Psoas muscle (tissue), 8 donors: ENCODE measurements at regions of chr1 and their contacts with region 1.

Region 1: DNA sequence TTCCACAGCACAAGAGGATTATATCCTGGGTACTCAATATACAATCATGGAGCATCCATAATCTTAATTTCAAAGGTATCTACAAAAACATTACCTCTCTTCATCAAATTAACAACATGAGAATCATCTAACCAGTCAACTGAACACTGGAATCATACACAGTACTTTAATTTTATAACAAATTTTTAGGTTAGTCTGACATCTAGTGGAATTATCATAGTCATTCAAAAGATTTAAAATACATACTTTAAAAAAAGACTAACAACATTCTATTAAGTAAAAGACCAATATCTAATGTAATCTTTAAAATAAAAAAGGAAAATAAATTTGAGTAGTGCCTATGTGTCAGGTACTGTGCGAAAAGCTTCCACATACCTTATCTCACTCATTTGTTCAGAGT is 16.8 kb upstream of the SH3GLB1 start:
- DNase-seq: no peak
- ATAC-seq: no peak
- H3K4me3 ChIP-seq: no peak overlapping the region
- H3K27ac ChIP-seq: no peak overlapping the region
- H3K4me1 ChIP-seq: no peaks in the 10 kb centered on the region
- H3K27me3 ChIP-seq: no peaks in the 10 kb centered on the region
- CTCF ChIP-seq: no peak

Region 2: DNA sequence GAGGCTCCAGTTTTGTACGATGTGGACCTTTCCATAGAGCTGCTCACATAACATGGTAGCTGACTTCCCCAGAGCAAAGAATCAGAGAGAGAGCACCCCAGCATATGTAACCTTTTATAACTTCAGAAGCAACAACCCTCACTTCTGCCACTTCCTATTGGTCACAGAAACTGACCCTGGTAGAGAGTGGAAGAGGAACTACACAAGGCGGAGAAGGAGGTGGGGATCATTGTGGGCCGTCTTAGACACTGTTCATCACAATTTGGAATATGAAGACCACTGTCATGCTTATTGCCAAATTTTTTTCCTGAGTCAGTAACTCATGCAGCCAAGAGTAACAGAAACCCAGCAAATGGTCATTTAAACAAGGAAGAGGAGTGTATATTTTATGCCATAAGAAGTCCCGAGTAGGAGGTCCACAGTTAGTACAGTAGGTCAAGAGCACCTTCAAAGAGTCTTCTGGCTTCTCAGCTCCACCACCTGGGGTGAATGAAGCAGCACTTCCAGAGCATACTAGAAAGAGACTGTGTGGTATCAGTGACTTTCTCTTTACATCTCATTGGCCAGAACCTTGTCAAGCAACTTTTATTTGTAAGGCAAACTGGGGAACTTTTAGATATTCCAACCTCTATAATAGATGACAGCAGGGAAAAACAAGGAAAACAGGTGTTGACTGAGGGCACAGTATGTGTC is 363.3 kb before region 1 on chr1:
- intact Hi-C with region 1: no loop called
- DNase-seq: no peak
- ATAC-seq: no peak
- H3K4me3 ChIP-seq: no peak overlapping the region
- H3K27ac ChIP-seq: no peak overlapping the region
- H3K4me1 ChIP-seq: no peaks in the 10 kb centered on the region
- H3K27me3 ChIP-seq: no peaks in the 10 kb centered on the region
- CTCF ChIP-seq: no peak

Region 3: GRCh38 chr1:86352096-86352495 is 335.5 kb before region 1 on chr1:
- intact Hi-C with region 1: no loop called
- DNase-seq: no peak
- ATAC-seq: no peak
- H3K4me3 ChIP-seq: no peak overlapping the region
- H3K27ac ChIP-seq: no peak overlapping the region
- H3K4me1 ChIP-seq: no peaks in the 10 kb centered on the region
- H3K27me3 ChIP-seq: no peaks in the 10 kb centered on the region
- CTCF ChIP-seq: no peak

Region 4: GRCh38 chr1:86478416-86479156 is 209.0 kb before region 1 on chr1:
- intact Hi-C with region 1: loop called in 1 of 2 experiments (anchors 5 kb)
- DNase-seq: no peak
- ATAC-seq: no peak
- H3K4me3 ChIP-seq: no peak overlapping the region
- H3K27ac ChIP-seq: no peak overlapping the region
- H3K4me1 ChIP-seq: no peaks in the 10 kb centered on the region
- H3K27me3 ChIP-seq: no peaks in the 10 kb centered on the region
- CTCF ChIP-seq: no peak

Region 5: GRCh38 chr1:86798608-86799291 is 111.2 kb after region 1 on chr1:
- intact Hi-C with region 1: no loop called
- DNase-seq: no peak
- ATAC-seq: no peak
- H3K4me3 ChIP-seq: no peak overlapping the region
- H3K27ac ChIP-seq: no peak overlapping the region
- H3K4me1 ChIP-seq: peaks cover under 1% of the 10 kb centered on the region
- H3K27me3 ChIP-seq: no peaks in the 10 kb centered on the region
- CTCF ChIP-seq: no peak